PC-9 (cell line): ENCODE measurements at regions of chr20 and their contacts with region 1.

Region 1: DNA sequence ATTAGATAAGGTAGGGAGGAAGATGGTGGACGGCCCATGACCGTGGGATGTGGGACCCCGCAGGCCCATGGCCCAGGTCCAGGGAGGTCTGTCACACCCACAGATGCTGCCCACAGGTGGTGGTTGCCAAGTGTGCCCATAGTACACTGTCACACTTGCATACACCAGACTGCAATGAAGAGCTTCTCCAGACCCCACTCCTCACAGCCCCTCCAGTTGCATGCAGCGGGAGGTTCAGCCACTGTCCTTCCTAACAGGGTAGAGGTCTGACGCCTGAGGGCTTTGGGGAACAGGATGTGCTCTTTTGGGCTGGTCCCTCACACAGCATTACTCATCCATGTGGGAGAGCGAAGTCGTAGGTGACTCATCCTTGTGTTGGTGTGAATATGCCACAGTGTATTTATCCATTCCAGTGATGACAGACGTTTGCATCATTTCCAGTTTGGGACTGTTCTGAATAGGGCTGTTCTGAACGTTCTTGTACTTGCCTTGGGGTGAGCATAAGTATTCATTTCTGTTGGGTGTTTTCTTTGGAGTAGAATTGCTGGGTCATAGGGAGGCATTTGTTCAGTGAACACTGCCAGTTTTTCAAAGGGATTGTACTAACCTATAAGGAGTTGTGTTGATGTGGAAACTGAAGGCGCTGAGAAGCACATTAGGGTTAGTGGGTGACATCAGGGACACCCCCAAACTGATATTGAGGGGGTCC is 10.1 kb upstream of the PYGB start:
- DNase-seq: peak; percentile 82 to 99
- H3K4me3 ChIP-seq: no peak overlapping the region
- H3K27ac ChIP-seq: peak overlapping the region; percentile 98
- H3K4me1 ChIP-seq: peaks cover 77% of the 10 kb centered on the region
- H3K27me3 ChIP-seq: no peaks in the 10 kb centered on the region
- CTCF ChIP-seq: no peak

Region 2: GRCh38 chr20:24134284-24134683 is 1103.5 kb before region 1 on chr20:
- CTCF ChIA-PET with region 1: no interaction called
- POLR2A ChIA-PET with region 1: no interaction called
- intact Hi-C with region 1: loop called (anchors 5 kb)
- DNase-seq: peak; percentile 77 to 94
- H3K4me3 ChIP-seq: peak overlapping the region; percentile 2; the same call in 1 of the 2 replicates
- H3K27ac ChIP-seq: peak overlapping the region; percentile 97
- H3K4me1 ChIP-seq: peaks cover 96% of the 10 kb centered on the region
- H3K27me3 ChIP-seq: no peaks in the 10 kb centered on the region
- CTCF ChIP-seq: no peak

Region 3: DNA sequence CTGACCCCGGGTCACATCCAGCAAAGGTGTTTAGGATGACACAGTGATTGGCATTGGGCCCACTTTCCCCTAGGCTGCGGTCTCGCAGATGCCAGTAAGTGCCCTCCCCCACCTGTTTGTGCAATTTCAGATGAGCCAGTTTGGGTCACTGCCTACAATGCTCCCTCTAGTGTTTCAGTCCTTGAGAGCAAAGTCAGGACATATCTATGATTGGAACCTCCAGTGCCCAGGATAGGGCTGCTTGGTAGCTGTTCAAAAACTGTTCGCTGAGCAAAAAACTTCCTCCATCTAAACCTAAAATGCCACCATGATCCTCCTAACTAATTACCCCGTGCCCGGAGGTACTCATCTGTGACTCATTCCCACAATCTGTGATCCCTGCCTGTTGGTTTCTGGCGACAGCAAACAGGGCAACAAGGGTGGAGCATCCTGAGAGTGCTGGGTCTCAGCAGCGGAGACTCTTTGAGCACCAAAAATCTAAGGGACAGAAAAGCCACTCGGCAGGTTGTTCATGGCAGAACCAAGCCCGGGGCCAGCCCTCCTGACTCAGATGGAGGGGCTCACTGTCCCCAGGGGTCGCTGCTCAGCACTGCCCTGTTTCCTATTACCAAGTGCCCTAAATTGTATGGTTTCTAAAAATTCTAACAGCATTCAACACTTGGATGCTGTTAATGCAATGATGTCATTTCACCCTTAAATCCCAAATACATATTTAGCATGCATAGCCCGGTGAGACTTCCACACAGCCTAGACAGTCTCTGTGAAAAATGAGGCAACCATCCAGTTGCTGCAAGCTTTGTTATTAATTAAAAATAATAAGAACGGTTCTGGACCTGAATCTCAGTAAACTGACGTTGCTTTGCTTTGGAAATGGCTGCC is 160.8 kb before region 1 on chr20:
- CTCF ChIA-PET with region 1: no interaction called
- POLR2A ChIA-PET with region 1: no interaction called
- intact Hi-C with region 1: loop called (anchors 5 kb)
- DNase-seq: peak; percentile 93 to 95
- H3K4me3 ChIP-seq: peak overlapping the region; percentile 54; the same call in 1 of the 2 replicates
- H3K27ac ChIP-seq: peak overlapping the region; percentile 77
- H3K4me1 ChIP-seq: peaks cover 70% of the 10 kb centered on the region
- H3K27me3 ChIP-seq: no peaks in the 10 kb centered on the region
- CTCF ChIP-seq: peak; percentile 44; the same call in 1 of the 2 replicates

Region 4: GRCh38 chr20:25223179-25223661 is 14.5 kb before region 1 on chr20:
- CTCF ChIA-PET with region 1: interaction called, 12 read pairs
- POLR2A ChIA-PET with region 1: interaction called, 18 read pairs
- intact Hi-C with region 1: no loop called
- DNase-seq: peak; percentile 92 to 98
- H3K4me3 ChIP-seq: peak overlapping the region; percentile 20; the same call in 1 of the 2 replicates
- H3K27ac ChIP-seq: peak overlapping the region; percentile 97
- H3K4me1 ChIP-seq: peaks cover 52% of the 10 kb centered on the region
- H3K27me3 ChIP-seq: no peaks in the 10 kb centered on the region
- CTCF ChIP-seq: peak; percentile 45; the same call in 1 of the 2 replicates

Region 5: GRCh38 chr20:25247956-25248785 is 10.4 kb after region 1 on chr20 and contains the start of gene PYGB:
- CTCF ChIA-PET with region 1: no interaction called
- POLR2A ChIA-PET with region 1: interaction called, 8 read pairs
- intact Hi-C with region 1: loop called (anchors 1 kb)
- DNase-seq: peak; percentile 65 to 77
- H3K4me3 ChIP-seq: peak within 1 kb of the TSS; percentile 96
- H3K27ac ChIP-seq: peak within 1 kb of the TSS; percentile 83
- H3K4me1 ChIP-seq: peaks cover 58% of the 10 kb centered on the region
- H3K27me3 ChIP-seq: no peaks in the 10 kb centered on the region
- CTCF ChIP-seq: no peak
- total RNA-seq, gene PYGB: 127 and 133 TPM in 2 replicates

Region 6: GRCh38 chr20:25254986-25255680 is 17.4 kb after region 1 on chr20:
- CTCF ChIA-PET with region 1: interaction called, 3 read pairs
- POLR2A ChIA-PET with region 1: no interaction called
- intact Hi-C with region 1: loop called (anchors 2 kb)
- DNase-seq: peak in 1 of 2 experiments; percentile 89
- H3K4me3 ChIP-seq: no peak overlapping the region; the same call in 1 of the 2 replicates
- H3K27ac ChIP-seq: peak overlapping the region; percentile 86; the same call in 1 of the 2 replicates
- H3K4me1 ChIP-seq: peaks cover 65% of the 10 kb centered on the region
- H3K27me3 ChIP-seq: no peaks in the 10 kb centered on the region
- CTCF ChIP-seq: no peak